ENCODE measurements at regions of chr12 and their contacts with region 1.

Region 1: GRCh38 chr12:46675736-46676135 is 150.1 kb downstream of the SLC38A4 start:
- DNase-seq: peak; percentile 33 to 52 (median 48)
- ATAC-seq: peak; percentile 83 to 90 (median 89)
- H3K4me3 ChIP-seq: no peak overlapping the region
- H3K27ac ChIP-seq: no peak overlapping the region
- H3K4me1 ChIP-seq: no peaks in the 10 kb centered on the region
- H3K27me3 ChIP-seq: no peaks in the 10 kb centered on the region
- CTCF ChIP-seq: peak; percentile 67 to 78 (median 71)
- POLR2A ChIP-seq: no peak

Region 2: DNA sequence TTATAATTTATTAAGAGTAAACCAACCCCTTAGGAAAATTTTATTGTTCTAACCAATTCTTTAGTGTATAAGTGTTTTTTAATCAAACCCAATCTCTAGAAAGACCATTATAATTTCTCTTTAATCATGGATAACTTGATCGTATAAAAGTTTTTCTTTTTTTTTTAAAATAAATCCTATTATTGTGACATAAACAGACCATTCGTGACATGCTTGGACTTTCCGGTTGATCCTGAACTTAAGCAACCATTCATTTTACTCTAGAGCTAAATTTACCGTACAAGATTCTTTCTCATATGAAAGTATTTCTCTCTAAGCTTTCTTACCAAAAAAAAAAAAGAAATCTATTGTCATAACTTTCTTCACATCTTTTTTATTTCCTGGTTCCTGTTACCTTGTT is 182.6 kb after region 1 on chr12:
- intact Hi-C with region 1: no loop called
- DNase-seq: no peak
- ATAC-seq: no peak
- H3K4me3 ChIP-seq: no peak overlapping the region
- H3K27ac ChIP-seq: no peak overlapping the region
- H3K4me1 ChIP-seq: no peaks in the 10 kb centered on the region
- H3K27me3 ChIP-seq: no peaks in the 10 kb centered on the region
- CTCF ChIP-seq: no peak
- POLR2A ChIP-seq: no peak

Region 3: GRCh38 chr12:46933947-46934346 is 258.2 kb after region 1 on chr12:
- intact Hi-C with region 1: loop called in 1 of 2 experiments (anchors 5 kb)
- DNase-seq: no peak
- ATAC-seq: peak; percentile 78 to 89 (median 81)
- H3K4me3 ChIP-seq: no peak overlapping the region
- H3K27ac ChIP-seq: peak overlapping the region in 2 of 3 donors; percentile 63
- H3K4me1 ChIP-seq: peaks cover 0 to 32% (median 6%) of the 10 kb centered on the region in 4 donors
- H3K27me3 ChIP-seq: no peaks in the 10 kb centered on the region
- CTCF ChIP-seq: peak; percentile 64 to 80 (median 74)
- POLR2A ChIP-seq: no peak

Measured in right lobe of liver (tissue), 6 donors.